ENCODE measurements at regions of chr1 and their contacts with region 1.

Region 1: GRCh38 chr1:97849345-97850340 is 71.2 kb downstream of the DPYD start:
- DNase-seq: peak; percentile 83
- ATAC-seq: peak; percentile 99
- H3K4me3 ChIP-seq: no peak overlapping the region
- H3K27ac ChIP-seq: peak overlapping the region; percentile 61
- H3K4me1 ChIP-seq: peaks cover 17% of the 10 kb centered on the region
- H3K27me3 ChIP-seq: no peaks in the 10 kb centered on the region
- CTCF ChIP-seq: no peak

Region 2: GRCh38 chr1:97898948-97899347 is 49.3 kb after region 1 on chr1:
- CTCF ChIA-PET with region 1: no interaction called
- POLR2A ChIA-PET with region 1: no interaction called
- intact Hi-C with region 1: loop called (anchors 5 kb)
- DNase-seq: peak; percentile 49
- ATAC-seq: peak; percentile 59
- H3K4me3 ChIP-seq: no peak overlapping the region
- H3K27ac ChIP-seq: no peak overlapping the region
- H3K4me1 ChIP-seq: peaks cover 16% of the 10 kb centered on the region
- H3K27me3 ChIP-seq: no peaks in the 10 kb centered on the region
- CTCF ChIP-seq: no peak